GM12878 (cell line): ENCODE measurements at regions of chr2 and their contacts with region 1.

Region 1: DNA sequence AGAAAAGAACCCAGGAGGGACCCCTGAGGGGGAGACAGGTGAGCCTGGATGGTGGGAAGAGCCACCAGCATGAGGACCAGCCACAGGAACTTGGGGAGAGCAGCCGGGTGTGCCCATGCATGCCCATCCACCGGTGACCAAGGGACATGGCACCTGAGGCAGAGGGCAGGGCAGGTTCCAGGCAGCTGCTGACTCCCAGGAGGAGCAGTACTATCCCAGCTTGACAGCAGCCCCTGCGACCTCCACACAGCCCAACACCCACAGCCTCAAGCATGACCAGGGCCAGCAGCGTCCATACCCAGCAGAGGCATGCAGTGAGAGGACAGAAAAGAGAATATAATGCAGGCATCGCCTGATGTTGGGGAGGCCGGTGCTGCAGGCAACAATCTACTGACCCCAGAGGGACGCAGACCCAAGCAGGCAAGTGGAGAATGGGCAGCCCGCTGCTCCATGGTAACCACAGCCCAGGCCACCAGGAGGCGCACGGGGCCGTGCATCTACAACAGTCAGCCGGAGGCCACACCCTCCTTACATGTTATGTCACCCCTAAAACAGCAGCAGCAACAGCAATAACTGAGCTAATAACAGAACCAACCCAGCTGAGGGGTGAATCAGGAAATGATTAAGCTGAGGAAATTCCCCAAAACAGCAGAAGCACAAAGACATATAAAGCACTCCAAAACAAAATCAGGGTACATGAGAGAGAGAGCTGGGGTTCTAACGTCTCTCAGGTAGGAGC is 44.1 kb downstream of the ANKMY1 start:
- DNase-seq: peak; percentile 71
- ATAC-seq: peak; percentile 100
- H3K4me3 ChIP-seq: no peak overlapping the region
- H3K27ac ChIP-seq: peak overlapping the region; percentile 49
- H3K4me1 ChIP-seq: peaks cover 10% of the 10 kb centered on the region
- H3K27me3 ChIP-seq: no peaks in the 10 kb centered on the region
- CTCF ChIP-seq: peak; percentile 97 to 99 (median 98)
- EP300 ChIP-seq: no peak
- POLR2A ChIP-seq: no peak
- RAD21 ChIP-seq: peak; percentile 90

Region 2: DNA sequence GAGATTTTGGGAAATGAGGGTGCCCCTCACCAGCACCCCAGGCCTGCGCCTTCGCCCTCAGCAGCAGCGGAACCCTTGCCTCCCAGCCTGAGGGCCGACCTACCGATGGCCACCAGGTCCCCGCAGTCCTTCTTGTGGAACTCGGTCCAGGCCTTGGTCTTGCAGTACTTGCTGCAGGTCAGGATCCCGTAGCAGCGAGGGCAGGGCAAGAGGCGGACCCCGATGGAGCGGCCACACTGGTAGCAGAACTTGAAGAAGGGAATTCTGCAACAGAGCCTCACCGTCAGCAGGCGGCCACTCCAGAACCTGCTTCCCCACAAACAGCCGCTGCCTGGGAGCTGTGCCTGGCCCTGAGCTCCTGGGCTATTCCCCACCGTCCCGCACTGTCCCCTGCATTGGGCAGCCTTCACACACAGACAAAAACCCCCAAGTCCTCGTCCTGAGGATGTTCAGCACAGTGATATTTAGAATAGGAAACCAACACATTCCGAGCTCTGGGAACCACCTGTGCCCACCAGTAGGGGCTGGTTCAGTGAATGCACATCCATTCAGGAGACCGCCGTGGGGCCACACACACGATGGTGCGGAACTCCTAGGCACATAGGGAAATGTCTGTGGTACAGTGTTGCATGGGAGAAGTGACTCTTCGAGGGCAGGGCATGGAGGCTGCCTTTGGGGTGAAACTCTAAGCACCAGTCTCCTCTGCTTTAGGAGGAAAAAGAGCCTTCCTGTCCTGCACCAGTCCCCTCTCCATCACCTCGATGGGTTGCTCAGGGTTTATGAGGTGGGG is 32.7 kb before region 1 on chr2:
- CTCF ChIA-PET with region 1: no interaction called
- POLR2A ChIA-PET with region 1: no interaction called
- RAD21 ChIA-PET with region 1: no interaction called
- SMC1A ChIA-PET with region 1: no interaction called
- in situ Hi-C with region 1: no loop called
- intact Hi-C with region 1: no loop called
- DNase-seq: no peak
- ATAC-seq: no peak
- H3K4me3 ChIP-seq: no peak overlapping the region
- H3K27ac ChIP-seq: no peak overlapping the region
- H3K4me1 ChIP-seq: no peaks in the 10 kb centered on the region
- H3K27me3 ChIP-seq: no peaks in the 10 kb centered on the region
- CTCF ChIP-seq: no peak
- EP300 ChIP-seq: no peak
- POLR2A ChIP-seq: no peak
- RAD21 ChIP-seq: no peak

Region 3: DNA sequence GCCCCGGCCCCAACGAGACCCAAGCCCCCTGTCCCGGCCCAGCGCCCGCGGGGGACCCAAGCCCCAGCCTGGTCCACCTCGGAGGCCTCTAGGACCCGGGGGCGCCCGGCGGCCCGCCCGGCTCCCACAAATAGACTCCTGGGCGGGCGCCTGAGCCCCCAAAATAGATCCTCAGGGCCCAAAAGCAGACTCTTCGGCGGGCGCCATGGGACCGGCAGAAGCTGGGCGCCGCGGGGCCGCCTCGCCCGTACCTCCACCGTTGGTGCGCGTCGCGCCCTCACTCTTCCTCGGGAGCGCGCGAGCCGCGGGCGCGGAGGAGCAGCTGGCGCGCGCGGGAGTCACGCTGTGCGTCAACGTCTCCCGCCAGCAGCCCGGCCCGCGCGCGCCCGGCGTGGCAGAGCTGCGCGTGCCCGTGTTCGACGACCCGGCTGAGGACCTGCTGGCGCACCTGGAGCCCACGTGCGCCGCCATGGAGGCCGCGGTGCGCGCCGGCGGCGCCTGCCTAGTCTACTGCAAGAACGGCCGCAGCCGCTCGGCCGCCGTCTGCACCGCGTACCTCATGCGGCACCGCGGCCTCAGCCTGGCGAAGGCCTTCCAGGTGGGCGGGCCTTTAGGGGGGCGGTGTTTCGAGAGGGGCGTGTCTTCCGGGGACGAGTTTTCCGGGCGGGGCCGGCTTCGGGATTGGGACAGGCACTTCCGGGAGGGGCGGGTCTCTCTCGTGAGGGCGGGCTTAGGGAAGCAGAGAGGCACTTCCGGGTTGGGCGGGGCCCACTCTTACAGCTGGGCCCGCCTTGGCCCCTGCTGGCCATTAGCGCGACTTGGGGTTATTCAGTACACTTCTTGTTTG is 47.0 kb after region 1 on chr2:
- CTCF ChIA-PET with region 1: interaction called, 45 read pairs
- POLR2A ChIA-PET with region 1: interaction called, 8 read pairs
- RAD21 ChIA-PET with region 1: interaction called, 29 read pairs
- SMC1A ChIA-PET with region 1: interaction called, 20 read pairs
- in situ Hi-C with region 1: no loop called
- intact Hi-C with region 1: loop called (anchors 5 kb)
- DNase-seq: peak; percentile 81
- ATAC-seq: peak; percentile 70
- H3K4me3 ChIP-seq: peak overlapping the region; percentile 91
- H3K27ac ChIP-seq: peak overlapping the region; percentile 96
- H3K4me1 ChIP-seq: peaks cover 46% of the 10 kb centered on the region
- H3K27me3 ChIP-seq: no peaks in the 10 kb centered on the region
- CTCF ChIP-seq: peak; percentile 6 to 36 (median 19); a peak in 4 of 6 replicates
- EP300 ChIP-seq: no peak
- POLR2A ChIP-seq: no peak
- RAD21 ChIP-seq: no peak

Region 4: GRCh38 chr2:240579771-240580614 is 66.3 kb after region 1 on chr2:
- CTCF ChIA-PET with region 1: interaction called, 49 read pairs
- POLR2A ChIA-PET with region 1: interaction called, 4 read pairs
- RAD21 ChIA-PET with region 1: interaction called, 49 read pairs
- SMC1A ChIA-PET with region 1: interaction called, 23 read pairs
- in situ Hi-C with region 1: no loop called
- intact Hi-C with region 1: no loop called
- DNase-seq: peak; percentile 62
- ATAC-seq: peak; percentile 72
- H3K4me3 ChIP-seq: no peak overlapping the region
- H3K27ac ChIP-seq: peak overlapping the region; percentile 62
- H3K4me1 ChIP-seq: peaks cover 43% of the 10 kb centered on the region
- H3K27me3 ChIP-seq: no peaks in the 10 kb centered on the region
- CTCF ChIP-seq: peak; percentile 71 to 77 (median 77)
- EP300 ChIP-seq: peak in 1 of 2 experiments; percentile 68; a peak in 2 of 4 replicates
- POLR2A ChIP-seq: peak; percentile 53; the same call in 1 of the 2 replicates
- RAD21 ChIP-seq: peak; percentile 51

Region 5: GRCh38 chr2:240622531-240623235 is 109.0 kb after region 1 on chr2:
- CTCF ChIA-PET with region 1: interaction called, 17 read pairs
- POLR2A ChIA-PET with region 1: no interaction called
- RAD21 ChIA-PET with region 1: interaction called, 7 read pairs
- SMC1A ChIA-PET with region 1: interaction called, 8 read pairs
- in situ Hi-C with region 1: no loop called
- intact Hi-C with region 1: no loop called
- DNase-seq: no peak
- ATAC-seq: no peak
- H3K4me3 ChIP-seq: no peak overlapping the region
- H3K27ac ChIP-seq: no peak overlapping the region
- H3K4me1 ChIP-seq: peaks cover 49% of the 10 kb centered on the region
- H3K27me3 ChIP-seq: no peaks in the 10 kb centered on the region
- CTCF ChIP-seq: no peak
- EP300 ChIP-seq: no peak
- POLR2A ChIP-seq: no peak
- RAD21 ChIP-seq: no peak

Region 6: GRCh38 chr2:240733803-240734495 is 220.2 kb after region 1 on chr2:
- CTCF ChIA-PET with region 1: interaction called, 5 read pairs
- POLR2A ChIA-PET with region 1: no interaction called
- RAD21 ChIA-PET with region 1: no interaction called
- SMC1A ChIA-PET with region 1: no interaction called
- in situ Hi-C with region 1: no loop called
- intact Hi-C with region 1: loop called (anchors 10 kb)
- DNase-seq: no peak
- ATAC-seq: peak; percentile 81
- H3K4me3 ChIP-seq: no peak overlapping the region
- H3K27ac ChIP-seq: no peak overlapping the region
- H3K4me1 ChIP-seq: no peaks in the 10 kb centered on the region
- H3K27me3 ChIP-seq: peaks cover 0 to 1% of the 10 kb centered on the region in 2 experiments; a peak in 3 of 4 replicates
- CTCF ChIP-seq: peak; percentile 23 to 42 (median 42)
- EP300 ChIP-seq: no peak
- POLR2A ChIP-seq: no peak
- RAD21 ChIP-seq: peak; percentile 44

Region 7: DNA sequence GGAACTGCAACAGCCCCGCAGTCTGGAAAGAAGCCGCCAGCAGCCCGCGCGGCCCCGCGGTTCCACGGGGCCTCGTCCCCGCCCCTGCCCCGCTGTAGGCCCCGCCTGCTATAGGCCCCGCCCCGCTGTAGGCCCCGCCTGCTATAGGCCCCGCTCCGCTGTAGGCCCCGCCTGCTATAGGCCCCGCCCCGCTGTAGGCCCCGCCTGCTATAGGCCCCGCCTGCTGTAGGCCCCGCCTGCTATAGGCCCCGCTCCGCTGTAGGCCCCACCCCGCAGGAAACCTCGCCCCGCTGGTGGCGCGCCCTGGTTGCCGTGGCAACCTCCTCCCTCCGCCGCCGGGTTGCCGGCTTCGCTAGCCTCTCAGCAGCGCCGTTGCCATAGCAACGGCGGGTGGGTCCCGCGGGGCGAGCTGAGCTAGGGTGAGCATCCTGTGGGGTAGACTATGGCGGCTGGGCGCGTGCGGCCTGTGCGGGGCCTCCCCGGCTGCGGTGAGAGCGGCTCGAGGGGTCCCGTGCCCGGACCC is 318.5 kb after region 1 on chr2:
- CTCF ChIA-PET with region 1: no interaction called
- POLR2A ChIA-PET with region 1: no interaction called
- RAD21 ChIA-PET with region 1: no interaction called
- SMC1A ChIA-PET with region 1: no interaction called
- in situ Hi-C with region 1: loop called (anchors 25 kb)
- intact Hi-C with region 1: no loop called
- DNase-seq: peak; percentile 17
- ATAC-seq: peak; percentile 91
- H3K4me3 ChIP-seq: no peak overlapping the region
- H3K27ac ChIP-seq: no peak overlapping the region
- H3K4me1 ChIP-seq: no peaks in the 10 kb centered on the region
- H3K27me3 ChIP-seq: no peaks in the 10 kb centered on the region; a peak in 1 of 4 replicates
- CTCF ChIP-seq: no peak
- EP300 ChIP-seq: no peak
- POLR2A ChIP-seq: no peak
- RAD21 ChIP-seq: no peak